ENCODE measurements at regions of chr17 and their contacts with region 1.

Region 1: DNA sequence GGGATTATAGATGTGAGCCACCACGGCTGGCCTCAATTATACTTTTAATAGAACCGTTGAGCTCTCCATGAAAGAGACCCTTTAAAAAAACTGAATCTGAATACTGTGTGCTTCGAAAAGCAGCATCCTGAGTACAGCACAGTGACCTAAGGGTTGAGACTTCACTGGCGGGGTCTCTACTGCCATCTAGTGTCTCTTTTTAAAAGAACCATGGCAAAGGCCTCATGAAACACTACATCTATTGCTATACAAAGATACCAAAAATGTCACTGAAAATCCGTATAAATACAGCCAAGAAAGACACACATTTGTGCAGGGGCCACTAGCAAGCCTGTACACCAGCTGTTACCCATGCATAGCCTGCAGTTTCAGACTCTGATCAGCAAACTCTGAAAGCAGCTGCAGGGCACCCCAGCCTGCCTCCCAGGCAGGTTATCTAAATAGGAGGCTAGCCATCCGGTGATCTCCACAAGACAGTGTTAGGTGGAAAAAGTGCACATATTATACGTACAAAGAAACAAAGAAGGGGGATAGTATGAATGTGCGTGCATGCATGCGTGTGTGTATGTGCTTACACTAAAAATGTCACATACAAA is 35.3 kb downstream of the NPLOC4 start:
- DNase-seq: peak; percentile 55
- ATAC-seq: peak; percentile 97
- H3K4me3 Mint-ChIP-seq: no peak overlapping the region
- H3K27ac Mint-ChIP-seq: peak overlapping the region; percentile 76
- H3K4me1 Mint-ChIP-seq: peaks cover 7% of the 10 kb centered on the region
- H3K27me3 Mint-ChIP-seq: no peaks in the 10 kb centered on the region
- CTCF ChIP-seq: peak; percentile 89

Region 2: GRCh38 chr17:81340607-81341515 is 260.8 kb before region 1 on chr17:
- CTCF ChIA-PET with region 1: no interaction called
- POLR2A ChIA-PET with region 1: no interaction called
- intact Hi-C with region 1: no loop called
- DNase-seq: no peak
- ATAC-seq: no peak
- H3K4me3 Mint-ChIP-seq: no peak overlapping the region
- H3K27ac Mint-ChIP-seq: no peak overlapping the region
- H3K4me1 Mint-ChIP-seq: peaks cover 14% of the 10 kb centered on the region
- H3K27me3 Mint-ChIP-seq: peaks cover 45% of the 10 kb centered on the region
- CTCF ChIP-seq: no peak

Region 3: GRCh38 chr17:81394921-81395599 is 206.6 kb before region 1 on chr17 and contains the start of gene BAHCC1:
- CTCF ChIA-PET with region 1: no interaction called
- POLR2A ChIA-PET with region 1: no interaction called
- intact Hi-C with region 1: no loop called
- DNase-seq: peak; percentile 95
- ATAC-seq: peak; percentile 87
- H3K4me3 Mint-ChIP-seq: peak within 1 kb of the TSS; percentile 47
- H3K27ac Mint-ChIP-seq: no peak within 1 kb of the TSS
- H3K4me1 Mint-ChIP-seq: peaks cover 21% of the 10 kb centered on the region
- H3K27me3 Mint-ChIP-seq: peaks cover 55% of the 10 kb centered on the region
- CTCF ChIP-seq: no peak
- total RNA-seq, gene BAHCC1: 0.40 to 0.65 TPM

Region 4: GRCh38 chr17:81579821-81580321 is 21.8 kb before region 1 on chr17:
- CTCF ChIA-PET with region 1: interaction called, 21 read pairs
- POLR2A ChIA-PET with region 1: interaction called, 4 read pairs
- intact Hi-C with region 1: no loop called
- DNase-seq: no peak
- ATAC-seq: no peak
- H3K4me3 Mint-ChIP-seq: no peak overlapping the region
- H3K27ac Mint-ChIP-seq: no peak overlapping the region
- H3K4me1 Mint-ChIP-seq: peaks cover 19% of the 10 kb centered on the region
- H3K27me3 Mint-ChIP-seq: no peaks in the 10 kb centered on the region
- CTCF ChIP-seq: no peak

Region 5: DNA sequence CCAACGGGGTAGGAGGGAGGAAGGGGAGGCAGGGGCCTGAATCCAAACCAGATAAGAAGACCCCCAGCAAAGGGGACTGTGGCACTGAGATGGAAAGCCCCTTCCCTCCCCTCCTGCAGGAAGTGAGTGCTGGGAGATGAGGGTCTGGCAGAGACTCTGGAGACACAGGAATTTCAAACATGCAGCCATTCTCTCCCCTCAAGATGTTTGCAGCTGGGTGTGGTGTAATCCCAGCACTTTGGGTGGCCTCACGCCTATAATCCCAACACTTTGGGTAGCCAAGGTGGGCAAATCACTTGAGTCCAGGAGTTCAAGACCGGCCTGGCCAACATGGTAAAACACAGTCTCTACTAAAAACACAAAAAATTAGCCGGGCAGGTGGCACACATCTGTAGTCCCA is 15.5 kb before region 1 on chr17:
- CTCF ChIA-PET with region 1: interaction called, 21 read pairs
- POLR2A ChIA-PET with region 1: interaction called, 4 read pairs
- intact Hi-C with region 1: no loop called
- DNase-seq: no peak
- ATAC-seq: no peak
- H3K4me3 Mint-ChIP-seq: no peak overlapping the region
- H3K27ac Mint-ChIP-seq: no peak overlapping the region
- H3K4me1 Mint-ChIP-seq: no peaks in the 10 kb centered on the region
- H3K27me3 Mint-ChIP-seq: no peaks in the 10 kb centered on the region
- CTCF ChIP-seq: no peak

Region 6: DNA sequence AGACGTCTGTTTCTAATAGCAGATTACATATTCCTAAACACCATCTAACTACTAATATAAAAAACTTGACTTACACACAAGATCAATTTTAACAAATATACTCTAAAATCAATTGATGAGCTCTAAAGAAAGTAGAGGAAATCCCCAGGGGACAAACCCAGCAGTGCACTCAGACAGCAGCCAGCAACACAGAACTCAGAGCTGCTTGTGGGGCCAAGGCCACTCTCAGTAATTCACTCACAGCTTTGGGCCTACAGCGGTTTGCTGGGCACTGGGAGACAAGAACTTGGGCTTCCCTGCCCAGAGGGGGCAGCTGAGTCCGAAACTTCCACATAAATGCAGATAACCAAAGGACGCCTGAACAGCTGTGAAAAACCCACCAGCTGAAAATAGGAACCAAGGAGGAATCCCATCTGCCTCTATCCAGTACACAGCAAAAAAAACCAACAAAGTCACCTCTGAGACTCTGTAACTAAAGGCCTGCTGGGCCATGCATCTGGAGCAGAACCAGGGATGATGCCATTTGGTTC is 13.8 kb after region 1 on chr17:
- CTCF ChIA-PET with region 1: interaction called, 14 read pairs
- POLR2A ChIA-PET with region 1: interaction called, 3 read pairs
- intact Hi-C with region 1: no loop called
- DNase-seq: peak; percentile 22
- ATAC-seq: no peak
- H3K4me3 Mint-ChIP-seq: no peak overlapping the region
- H3K27ac Mint-ChIP-seq: peak overlapping the region; percentile 94
- H3K4me1 Mint-ChIP-seq: peaks cover 26% of the 10 kb centered on the region
- H3K27me3 Mint-ChIP-seq: no peaks in the 10 kb centered on the region
- CTCF ChIP-seq: no peak